ENCODE measurements at regions of chr5 and their contacts with region 1.

Region 1: DNA sequence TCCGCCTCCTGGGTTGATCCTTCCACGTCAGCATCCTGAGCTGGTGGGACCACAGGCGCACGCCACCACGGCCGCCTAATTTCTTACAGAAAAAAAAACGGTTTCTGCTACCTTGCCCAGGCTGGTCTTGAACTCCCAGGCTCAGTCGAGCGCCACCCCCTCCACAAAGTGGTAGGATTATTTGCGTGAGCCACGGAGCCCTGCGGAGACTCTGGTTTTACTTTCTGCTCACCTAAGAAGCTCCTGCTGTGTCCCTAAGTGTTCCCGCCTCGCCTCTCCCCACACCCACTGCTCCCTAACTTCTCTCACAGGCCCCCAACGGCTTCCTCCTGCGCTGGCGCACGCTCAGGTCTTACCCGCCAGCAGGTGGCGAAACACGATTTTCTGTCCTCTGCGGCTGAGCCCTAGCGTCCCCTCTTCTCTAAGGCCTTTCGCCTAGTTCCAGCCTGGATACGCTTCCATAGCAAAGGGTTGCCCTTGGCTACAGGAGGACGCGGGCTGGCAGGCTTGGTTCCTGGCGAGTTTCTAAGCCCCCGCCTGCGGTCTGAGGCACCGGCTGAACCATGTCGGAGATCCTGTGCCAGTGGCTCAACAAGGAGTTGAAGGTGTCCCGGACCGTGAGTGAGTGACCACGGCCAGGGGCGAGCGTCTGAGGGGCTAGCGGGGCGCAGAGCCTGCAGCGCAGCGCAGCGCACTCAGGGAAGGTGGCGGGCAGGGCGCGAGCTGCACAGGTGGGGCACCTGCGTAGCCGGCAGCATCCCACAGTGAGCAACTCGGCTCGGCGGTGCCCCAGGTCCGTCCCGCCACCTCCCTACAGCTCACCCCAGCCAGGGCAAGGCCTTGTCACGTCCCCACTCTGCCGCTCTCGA is at the start of gene SPEF2:
- DNase-seq: peak; percentile 89 to 93
- H3K4me3 ChIP-seq: peak within 1 kb of the TSS; percentile 79
- H3K27ac ChIP-seq: no peak within 1 kb of the TSS
- H3K4me1 ChIP-seq: peaks cover 9% of the 10 kb centered on the region
- H3K27me3 ChIP-seq: no peaks in the 10 kb centered on the region
- CTCF ChIP-seq: peak; percentile 85
- total RNA-seq, gene SPEF2: 7.5 and 10.6 TPM in 2 replicates

Region 2: GRCh38 chr5:35656721-35657120 is 39.1 kb after region 1 on chr5:
- CTCF ChIA-PET with region 1: no interaction called
- POLR2A ChIA-PET with region 1: interaction called, 15 read pairs
- intact Hi-C with region 1: no loop called
- DNase-seq: no peak
- H3K4me3 ChIP-seq: no peak overlapping the region
- H3K27ac ChIP-seq: no peak overlapping the region
- H3K4me1 ChIP-seq: no peaks in the 10 kb centered on the region
- H3K27me3 ChIP-seq: no peaks in the 10 kb centered on the region
- CTCF ChIP-seq: no peak